Activated T-helper 2 cell treated with anti-CD3 and anti-CD28 coated beads, Interferon-gamma antibody, Interleukin-2, Interleukin-4, amounts not matched to agents 10 μg/mL and 5 μg/mL and 100 μg/mL, durations not matched to agents 14 hours and 24 hours and 36 hours (primary cell): ENCODE measurements at regions of chr16 and their contacts with region 1.

Region 1: GRCh38 chr16:56191156-56191815 is at the start of gene GNAO1:
- DNase-seq: peak; percentile 44
- H3K4me3 Mint-ChIP-seq: peak within 1 kb of the TSS; percentile 69
- H3K27ac Mint-ChIP-seq: no peak within 1 kb of the TSS
- H3K4me1 Mint-ChIP-seq: peaks cover 19% of the 10 kb centered on the region
- H3K27me3 Mint-ChIP-seq: peaks cover 78% of the 10 kb centered on the region
- total RNA-seq, gene GNAO1: 0.57 and 0.83 TPM in 2 replicates

Region 2: DNA sequence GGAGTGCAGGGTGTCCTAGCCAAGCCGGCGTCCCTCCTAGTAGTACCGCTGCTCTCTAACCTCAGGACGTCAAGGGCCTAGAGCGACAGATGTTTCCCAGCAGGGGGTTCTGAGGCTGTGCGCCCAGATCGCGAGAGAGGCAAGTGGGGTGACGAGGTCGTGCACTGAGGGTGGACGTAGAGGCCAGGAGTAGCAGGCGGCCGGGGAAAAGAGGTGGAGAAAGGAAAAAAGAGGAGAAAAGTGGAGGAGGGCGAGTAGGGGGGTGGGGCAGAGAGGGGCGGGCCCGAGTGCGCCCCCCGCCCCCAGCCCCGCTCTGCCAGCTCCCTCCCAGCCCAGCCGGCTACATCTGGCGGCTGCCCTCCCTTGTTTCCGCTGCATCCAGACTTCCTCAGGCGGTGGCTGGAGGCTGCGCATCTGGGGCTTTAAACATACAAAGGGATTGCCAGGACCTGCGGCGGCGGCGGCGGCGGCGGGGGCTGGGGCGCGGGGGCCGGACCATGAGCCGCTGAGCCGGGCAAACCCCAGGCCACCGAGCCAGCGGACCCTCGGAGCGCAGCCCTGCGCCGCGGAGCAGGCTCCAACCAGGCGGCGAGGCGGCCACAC is 712.4 kb before region 1 on chr16 and contains the start of gene MMP2:
- intact Hi-C with region 1: loop called (anchors 10 kb)
- DNase-seq: no peak
- H3K4me3 Mint-ChIP-seq: peak within 1 kb of the TSS; percentile 54
- H3K27ac Mint-ChIP-seq: no peak within 1 kb of the TSS
- H3K4me1 Mint-ChIP-seq: peaks cover 3% of the 10 kb centered on the region
- H3K27me3 Mint-ChIP-seq: peaks cover 40% of the 10 kb centered on the region
- total RNA-seq, gene MMP2: 0.11 and 0.34 TPM in 2 replicates

Region 3: GRCh38 chr16:55944377-55944802 is 246.9 kb before region 1 on chr16:
- intact Hi-C with region 1: no loop called
- DNase-seq: peak; percentile 12
- H3K4me3 Mint-ChIP-seq: no peak overlapping the region
- H3K27ac Mint-ChIP-seq: no peak overlapping the region
- H3K4me1 Mint-ChIP-seq: no peaks in the 10 kb centered on the region
- H3K27me3 Mint-ChIP-seq: peaks cover 15% of the 10 kb centered on the region

Region 4: GRCh38 chr16:56281256-56281805 is 90.0 kb after region 1 on chr16:
- intact Hi-C with region 1: no loop called
- DNase-seq: no peak
- H3K4me3 Mint-ChIP-seq: no peak overlapping the region
- H3K27ac Mint-ChIP-seq: no peak overlapping the region
- H3K4me1 Mint-ChIP-seq: peaks cover 21% of the 10 kb centered on the region
- H3K27me3 Mint-ChIP-seq: peaks cover 1% of the 10 kb centered on the region